K562 (cell line): ENCODE measurements at regions of chr6 and their contacts with region 1.

Region 1: DNA sequence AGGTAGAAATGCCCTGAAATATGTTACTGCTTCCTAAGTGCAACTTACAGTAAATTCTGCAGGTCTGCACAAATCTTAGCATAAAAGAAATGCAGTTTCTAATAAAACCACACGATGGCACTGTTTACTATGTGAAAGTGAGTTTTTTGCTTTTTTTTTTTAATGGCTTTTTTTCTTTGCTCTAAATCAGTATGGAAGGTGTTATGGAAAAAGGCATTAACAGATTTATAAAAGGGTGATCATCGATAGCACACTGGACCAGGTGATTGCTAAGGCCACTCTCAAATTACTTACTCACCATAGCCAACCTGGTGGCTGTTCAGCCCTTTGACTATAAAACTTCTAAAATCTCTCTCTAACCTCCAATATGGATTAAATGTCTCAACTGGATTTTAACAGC is 45.8 kb downstream of the AHI1 start:
- DNase-seq: peak in 3 of 4 experiments; percentile 20 to 47 (median 31)
- ATAC-seq: peak; percentile 50
- H3K4me3 ChIP-seq: no peak overlapping the region
- H3K27ac ChIP-seq: no peak overlapping the region
- H3K4me1 ChIP-seq: no peaks in the 10 kb centered on the region
- H3K27me3 ChIP-seq: no peaks in the 10 kb centered on the region
- CTCF ChIP-seq: peak; percentile 55 to 81 (median 62); a peak in 5 of 6 replicates
- EP300 ChIP-seq: no peak
- POLR2A ChIP-seq: no peak
- RAD21 ChIP-seq: peak; percentile 50 to 66

Region 2: DNA sequence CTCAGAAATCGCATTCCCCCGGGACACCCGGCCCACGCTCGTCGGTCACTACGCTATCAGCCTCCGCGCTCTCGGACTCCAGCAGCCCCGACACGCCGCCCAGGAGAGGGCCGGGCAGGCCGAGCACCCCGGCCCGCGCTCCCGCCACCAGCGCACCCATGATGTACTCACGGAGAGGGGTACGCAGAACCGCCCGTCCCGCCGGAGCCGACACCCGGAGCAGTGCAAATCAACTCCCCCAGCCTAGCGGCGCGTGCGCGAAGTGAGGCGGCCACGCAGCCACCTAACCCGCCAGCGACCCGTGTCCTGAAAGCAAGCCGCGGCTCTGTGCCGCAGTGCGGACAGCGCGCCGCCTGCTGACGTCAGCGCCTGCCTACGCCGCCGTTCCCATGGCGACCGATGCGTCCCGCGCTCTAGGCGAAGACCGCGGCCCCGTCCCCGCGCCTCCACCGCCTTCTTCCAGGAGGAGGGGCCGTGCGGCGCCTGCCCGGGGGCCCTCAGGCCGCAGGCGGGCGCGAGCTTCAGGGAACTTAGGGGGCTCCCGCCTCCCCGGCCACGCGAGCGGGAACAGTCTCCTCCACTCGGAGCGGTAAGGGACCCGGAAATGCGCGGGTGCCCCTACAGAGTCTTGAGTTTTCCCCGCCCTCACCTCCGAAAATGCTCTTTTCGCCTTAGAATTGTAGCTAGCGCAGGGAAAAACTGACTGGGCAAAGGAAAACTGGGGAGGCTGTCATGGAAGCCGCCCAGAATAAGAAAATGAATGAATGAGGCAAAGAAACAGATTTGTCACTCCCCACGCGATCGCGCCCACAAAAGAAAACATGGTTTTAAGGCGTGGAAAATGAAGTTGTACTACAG is 45.9 kb after region 1 on chr6 and contains the start of gene AHI1:
- CTCF ChIA-PET with region 1: no interaction called
- POLR2A ChIA-PET with region 1: no interaction called
- in situ Hi-C with region 1: no loop called
- intact Hi-C with region 1: loop called (anchors 5 kb)
- DNase-seq: peak; percentile 94 to 99 (median 96)
- ATAC-seq: peak; percentile 93
- H3K4me3 ChIP-seq: peak within 1 kb of the TSS; percentile 77
- H3K27ac ChIP-seq: peak within 1 kb of the TSS; percentile 88
- H3K4me1 ChIP-seq: peaks cover 13 to 15% of the 10 kb centered on the region in 2 experiments
- H3K27me3 ChIP-seq: no peaks in the 10 kb centered on the region
- CTCF ChIP-seq: peak in 1 of 3 experiments; percentile 1; a peak in 1 of 6 replicates
- EP300 ChIP-seq: no peak
- POLR2A ChIP-seq: peak; percentile 96
- RAD21 ChIP-seq: 0 out of 4 replicates have a peak, but pooled peaks of 1 of the 2 experiments have one; percentile 2
- polyA plus RNA-seq, gene AHI1: 24.7 to 27.7 TPM

Region 3: GRCh38 chr6:135675862-135676261 is 224.2 kb after region 1 on chr6:
- CTCF ChIA-PET with region 1: no interaction called
- POLR2A ChIA-PET with region 1: no interaction called
- in situ Hi-C with region 1: no loop called
- intact Hi-C with region 1: loop called (anchors 10 kb)
- DNase-seq: peak; percentile 43 to 67 (median 50)
- ATAC-seq: peak; percentile 87
- H3K4me3 ChIP-seq: no peak overlapping the region
- H3K27ac ChIP-seq: no peak overlapping the region
- H3K4me1 ChIP-seq: no peaks in the 10 kb centered on the region
- H3K27me3 ChIP-seq: peaks cover 0 to 4% of the 10 kb centered on the region in 2 experiments; a peak in 1 of 5 replicates
- CTCF ChIP-seq: peak in 2 of 3 experiments; percentile 54 to 56; a peak in 5 of 6 replicates
- EP300 ChIP-seq: no peak
- POLR2A ChIP-seq: no peak
- RAD21 ChIP-seq: peak; percentile 57 to 80

Region 4: DNA sequence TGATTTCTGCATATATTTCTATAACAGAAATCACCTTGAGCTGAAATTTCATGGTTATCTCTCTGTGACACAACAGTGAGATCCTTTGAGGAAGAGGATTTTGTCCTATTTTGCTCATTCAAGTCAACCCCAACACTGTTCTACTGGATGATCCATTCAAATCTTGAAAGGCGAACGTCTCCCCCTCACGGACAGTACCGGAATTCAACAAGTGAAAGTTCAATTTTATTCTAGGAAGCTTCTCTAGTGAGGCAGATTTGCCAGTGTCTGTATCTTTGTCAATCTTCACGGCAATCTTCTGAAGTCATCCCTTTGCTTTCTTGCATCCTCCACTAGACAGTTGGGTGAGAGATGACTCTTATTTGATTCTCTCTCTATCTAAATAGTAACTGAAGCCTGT is 308.1 kb after region 1 on chr6:
- CTCF ChIA-PET with region 1: no interaction called
- POLR2A ChIA-PET with region 1: no interaction called
- in situ Hi-C with region 1: no loop called
- intact Hi-C with region 1: loop called (anchors 10 kb)
- DNase-seq: peak in 1 of 4 experiments; percentile 22
- ATAC-seq: peak; percentile 69
- H3K4me3 ChIP-seq: no peak overlapping the region
- H3K27ac ChIP-seq: no peak overlapping the region
- H3K4me1 ChIP-seq: no peaks in the 10 kb centered on the region
- H3K27me3 ChIP-seq: no peaks in the 10 kb centered on the region
- CTCF ChIP-seq: peak; percentile 31 to 48 (median 39); a peak in 4 of 6 replicates
- EP300 ChIP-seq: no peak
- POLR2A ChIP-seq: no peak
- RAD21 ChIP-seq: peak; percentile 63 to 66

Region 5: DNA sequence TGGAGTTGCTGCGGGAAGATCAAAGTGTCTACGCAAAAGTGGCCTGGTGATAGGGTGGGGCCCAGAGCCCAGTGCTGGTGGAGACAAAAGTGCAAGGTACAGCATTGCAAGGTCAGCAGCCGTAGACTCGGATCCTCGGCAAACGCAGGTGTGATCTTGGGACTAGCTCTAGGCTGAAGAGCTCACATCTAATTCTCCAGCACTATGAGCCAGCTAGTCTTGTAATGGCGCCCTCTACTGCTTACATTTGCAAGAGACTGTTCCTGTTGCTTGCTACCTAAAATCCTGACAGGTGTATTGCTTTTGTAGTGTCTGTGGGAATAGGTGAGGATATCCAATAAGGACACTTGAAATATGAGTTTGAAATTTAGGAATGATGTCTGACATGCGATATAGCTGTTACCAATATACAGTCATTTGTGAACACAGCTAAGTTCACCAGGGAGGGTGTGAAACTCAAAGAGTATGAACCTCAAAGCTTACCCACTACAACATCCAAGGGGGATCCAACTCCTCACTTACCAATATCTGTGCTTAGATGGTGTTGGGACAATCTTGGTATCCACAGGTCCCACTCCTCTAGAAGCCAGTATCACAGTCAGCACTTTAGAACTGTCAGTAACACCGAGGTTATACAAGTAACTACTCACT is 458.2 kb after region 1 on chr6:
- CTCF ChIA-PET with region 1: interaction called, 4 read pairs
- POLR2A ChIA-PET with region 1: no interaction called
- in situ Hi-C with region 1: no loop called
- intact Hi-C with region 1: loop called (anchors 10 kb)
- DNase-seq: peak; percentile 35 to 74 (median 49)
- ATAC-seq: peak; percentile 96
- H3K4me3 ChIP-seq: no peak overlapping the region
- H3K27ac ChIP-seq: no peak overlapping the region
- H3K4me1 ChIP-seq: no peaks in the 10 kb centered on the region
- H3K27me3 ChIP-seq: peaks cover 0 to 2% of the 10 kb centered on the region in 2 experiments; a peak in 1 of 5 replicates
- CTCF ChIP-seq: peak; percentile 70 to 74 (median 71)
- EP300 ChIP-seq: no peak
- POLR2A ChIP-seq: no peak
- RAD21 ChIP-seq: peak; percentile 59 to 72